HepG2 (cell line): ENCODE measurements at regions of chr12 and their contacts with region 1.

Region 1: DNA sequence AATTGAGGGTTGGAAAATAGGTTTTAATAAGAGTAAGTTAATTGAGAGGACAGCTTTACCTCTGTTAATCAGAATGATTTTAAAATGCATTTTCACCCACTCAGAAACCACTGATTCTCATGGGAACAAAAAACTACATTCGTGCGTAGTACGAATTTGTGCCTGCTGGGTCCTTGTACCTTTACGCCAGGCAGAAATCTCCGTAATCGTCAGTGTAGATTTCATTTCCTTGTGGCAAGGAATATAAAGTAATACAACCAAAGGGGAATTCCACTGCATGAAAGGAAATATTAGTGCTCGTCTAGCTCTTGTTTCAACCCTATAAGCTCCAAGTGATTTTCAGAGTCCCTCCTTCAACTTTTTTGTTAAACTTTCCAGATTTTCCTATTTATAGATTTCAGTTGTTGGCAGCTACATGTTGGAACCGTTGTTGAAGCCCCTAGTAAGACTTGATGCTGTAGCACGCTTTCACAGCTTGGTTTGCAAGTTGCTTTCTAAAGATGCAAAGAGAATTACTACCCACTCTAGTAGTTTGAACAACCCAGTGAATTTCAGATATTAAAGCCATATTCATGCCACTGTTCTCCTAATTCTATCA is 90.6 kb downstream of the ETV6 start:
- DNase-seq: no peak
- ATAC-seq: no peak
- H3K4me3 ChIP-seq: no peak overlapping the region
- H3K27ac ChIP-seq: no peak overlapping the region
- H3K4me1 ChIP-seq: no peaks in the 10 kb centered on the region
- H3K27me3 ChIP-seq: no peaks in the 10 kb centered on the region
- CTCF ChIP-seq: no peak
- EP300 ChIP-seq: no peak
- POLR2A ChIP-seq: no peak
- RAD21 ChIP-seq: no peak

Region 2: DNA sequence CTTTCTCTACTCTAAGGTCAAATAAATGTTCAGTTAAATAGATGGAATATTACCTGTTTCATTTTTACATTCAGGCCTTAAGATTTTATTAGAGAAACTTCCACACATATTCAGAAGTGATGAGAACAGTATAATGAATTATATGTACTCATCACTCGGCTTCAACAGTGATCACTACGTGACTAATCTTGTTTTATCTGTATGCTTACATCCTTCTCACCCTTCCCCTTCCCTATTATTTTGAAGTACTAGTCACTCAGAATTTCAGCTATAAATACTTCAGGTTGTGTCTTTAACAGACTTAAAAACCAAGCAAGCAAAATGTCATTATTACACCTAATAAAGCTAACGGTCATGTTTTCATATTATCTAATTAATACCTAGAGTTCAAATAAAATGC is 55.7 kb before region 1 on chr12:
- CTCF ChIA-PET with region 1: no interaction called
- POLR2A ChIA-PET with region 1: no interaction called
- in situ Hi-C with region 1: no loop called
- intact Hi-C with region 1: no loop called
- DNase-seq: no peak
- ATAC-seq: no peak
- H3K4me3 ChIP-seq: no peak overlapping the region
- H3K27ac ChIP-seq: no peak overlapping the region
- H3K4me1 ChIP-seq: peaks cover 27% of the 10 kb centered on the region
- H3K27me3 ChIP-seq: no peaks in the 10 kb centered on the region
- CTCF ChIP-seq: no peak
- EP300 ChIP-seq: no peak
- POLR2A ChIP-seq: no peak
- RAD21 ChIP-seq: no peak

Region 3: DNA sequence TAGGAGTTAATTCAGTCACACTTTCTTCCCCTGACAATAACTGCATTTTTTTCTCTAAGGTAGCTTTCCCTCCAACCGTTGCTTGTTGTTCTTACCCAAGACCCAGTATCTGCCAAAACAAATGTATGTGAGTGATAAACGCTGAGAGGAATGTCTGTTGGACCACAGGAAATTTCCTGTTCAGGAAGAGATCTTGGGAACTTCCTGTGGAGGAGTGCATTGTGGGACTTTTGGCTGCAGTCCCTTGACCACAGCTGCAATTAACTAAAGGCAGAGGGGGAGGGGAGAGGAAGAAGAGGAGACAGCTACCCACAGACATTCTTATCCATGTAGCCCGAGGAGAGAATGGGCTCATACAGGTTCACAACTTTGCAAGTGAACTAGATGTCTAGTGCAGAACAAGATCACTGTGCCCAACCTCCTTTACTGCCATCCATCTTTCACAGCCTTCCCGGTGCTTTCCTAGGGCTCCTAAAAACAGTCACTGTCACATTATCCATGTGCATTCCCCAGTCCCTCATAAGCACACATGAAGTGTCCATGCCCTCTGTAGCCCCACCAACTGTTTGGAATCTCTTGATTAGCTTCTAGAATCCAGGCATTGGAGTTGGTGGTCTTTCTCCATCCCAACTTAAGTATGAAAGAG is 58.9 kb after region 1 on chr12:
- CTCF ChIA-PET with region 1: no interaction called
- POLR2A ChIA-PET with region 1: no interaction called
- in situ Hi-C with region 1: no loop called
- intact Hi-C with region 1: no loop called
- DNase-seq: peak; percentile 29
- ATAC-seq: no peak
- H3K4me3 ChIP-seq: no peak overlapping the region
- H3K27ac ChIP-seq: no peak overlapping the region
- H3K4me1 ChIP-seq: peaks cover 30% of the 10 kb centered on the region
- H3K27me3 ChIP-seq: no peaks in the 10 kb centered on the region
- CTCF ChIP-seq: no peak
- EP300 ChIP-seq: no peak
- POLR2A ChIP-seq: no peak
- RAD21 ChIP-seq: no peak

Region 4: DNA sequence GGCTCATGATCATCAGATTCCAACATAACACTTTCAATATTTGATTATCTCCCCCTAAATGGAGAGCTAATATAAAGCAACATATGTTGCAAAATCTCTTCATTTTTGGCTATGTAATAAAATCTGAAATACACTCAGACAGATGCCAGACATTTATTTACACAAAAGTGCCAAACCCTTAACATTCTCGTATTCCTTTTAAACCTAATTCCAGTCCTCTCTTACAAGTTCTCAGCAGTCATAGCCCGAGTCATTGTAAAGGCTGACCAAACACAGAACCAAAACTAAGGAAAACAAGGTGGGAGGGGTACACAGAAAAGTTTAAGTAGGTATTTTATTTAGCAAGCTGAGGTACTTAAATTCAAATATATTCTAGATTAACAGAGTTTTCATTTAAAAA is 445.3 kb after region 1 on chr12:
- CTCF ChIA-PET with region 1: no interaction called
- POLR2A ChIA-PET with region 1: no interaction called
- in situ Hi-C with region 1: no loop called
- intact Hi-C with region 1: loop called (anchors 5 kb)
- DNase-seq: no peak
- ATAC-seq: no peak
- H3K4me3 ChIP-seq: no peak overlapping the region
- H3K27ac ChIP-seq: no peak overlapping the region
- H3K4me1 ChIP-seq: 0 out of 2 replicates have a peak, but pooled peaks cover 5% of the 10 kb centered on the region
- H3K27me3 ChIP-seq: no peaks in the 10 kb centered on the region
- CTCF ChIP-seq: no peak
- EP300 ChIP-seq: no peak
- POLR2A ChIP-seq: no peak
- RAD21 ChIP-seq: no peak